Esophagus muscularis mucosa (tissue), 4 donors: ENCODE measurements at regions of chr17 and their contacts with region 1.

Region 1: DNA sequence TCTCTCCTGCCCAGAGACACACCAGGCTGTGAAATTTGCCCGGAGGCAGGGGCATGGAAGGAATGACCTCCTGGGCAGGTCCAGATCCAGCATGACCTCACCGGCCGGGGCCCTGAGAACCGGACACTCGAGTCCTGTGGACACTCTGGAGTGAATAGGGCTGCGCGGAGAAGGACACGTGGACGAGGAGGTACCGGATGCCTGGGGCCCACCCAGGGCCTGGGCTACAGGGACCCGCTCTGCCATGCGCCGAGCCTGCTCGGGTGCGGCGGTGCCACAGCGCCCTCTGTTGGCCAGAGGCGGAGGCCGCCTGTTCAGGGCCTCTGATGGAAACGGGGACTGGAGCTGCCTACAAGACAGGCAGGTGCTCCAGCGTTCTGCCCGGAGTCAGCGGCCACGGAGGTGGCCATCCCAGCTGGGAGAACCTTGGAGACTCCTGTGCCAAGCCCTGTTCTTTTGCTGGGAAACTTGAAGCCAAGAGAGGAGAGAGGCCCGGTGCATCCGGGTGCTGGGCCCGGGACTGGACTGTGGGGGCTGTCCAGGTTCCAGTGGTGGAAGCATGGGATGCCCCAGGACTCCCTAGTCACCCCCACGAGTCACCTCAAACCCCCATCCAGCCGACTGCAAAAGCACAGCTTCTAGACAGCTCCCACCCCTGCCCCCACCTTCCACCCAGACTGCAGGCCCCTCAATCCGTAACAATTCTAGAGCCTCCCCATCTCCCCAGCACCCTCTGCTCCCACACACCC is 19.3 kb upstream of the NXPH3 start:
- DNase-seq: no peak
- H3K4me3 ChIP-seq: peak overlapping the region in 1 of 4 donors; percentile 26
- H3K27ac ChIP-seq: no peak overlapping the region
- H3K4me1 ChIP-seq: peaks cover 4 to 12% (median 7%) of the 10 kb centered on the region in 4 donors
- H3K27me3 ChIP-seq: peaks cover 0 to 22% (median 0%) of the 10 kb centered on the region in 4 donors
- CTCF ChIP-seq: peak; percentile 93 to 100 (median 94)
- EP300 ChIP-seq: no peak
- POLR2A ChIP-seq: no peak

Region 2: GRCh38 chr17:49361902-49362722 is 194.3 kb before region 1 on chr17 and contains the start of gene ZNF652:
- intact Hi-C with region 1: no loop called
- DNase-seq: peak; percentile 95
- H3K4me3 ChIP-seq: peak within 1 kb of the TSS; percentile 86 to 100 (median 96)
- H3K27ac ChIP-seq: peak within 1 kb of the TSS; percentile 94 to 95 (median 95)
- H3K4me1 ChIP-seq: peaks cover 14 to 54% (median 48%) of the 10 kb centered on the region in 4 donors
- H3K27me3 ChIP-seq: no peaks in the 10 kb centered on the region
- CTCF ChIP-seq: no peak
- EP300 ChIP-seq: no peak
- POLR2A ChIP-seq: no peak
- total RNA-seq, gene ZNF652: 59.3 to 100.0 (median 83.0) TPM

Region 3: GRCh38 chr17:49435671-49436029 is 120.7 kb before region 1 on chr17:
- intact Hi-C with region 1: loop called (anchors 2 kb)
- DNase-seq: no peak
- H3K4me3 ChIP-seq: no peak overlapping the region
- H3K27ac ChIP-seq: no peak overlapping the region
- H3K4me1 ChIP-seq: peaks cover 0 to 10% (median 7%) of the 10 kb centered on the region in 4 donors
- H3K27me3 ChIP-seq: peaks cover 0 to 28% (median 12%) of the 10 kb centered on the region in 4 donors
- CTCF ChIP-seq: no peak
- EP300 ChIP-seq: no peak
- POLR2A ChIP-seq: no peak

Region 4: DNA sequence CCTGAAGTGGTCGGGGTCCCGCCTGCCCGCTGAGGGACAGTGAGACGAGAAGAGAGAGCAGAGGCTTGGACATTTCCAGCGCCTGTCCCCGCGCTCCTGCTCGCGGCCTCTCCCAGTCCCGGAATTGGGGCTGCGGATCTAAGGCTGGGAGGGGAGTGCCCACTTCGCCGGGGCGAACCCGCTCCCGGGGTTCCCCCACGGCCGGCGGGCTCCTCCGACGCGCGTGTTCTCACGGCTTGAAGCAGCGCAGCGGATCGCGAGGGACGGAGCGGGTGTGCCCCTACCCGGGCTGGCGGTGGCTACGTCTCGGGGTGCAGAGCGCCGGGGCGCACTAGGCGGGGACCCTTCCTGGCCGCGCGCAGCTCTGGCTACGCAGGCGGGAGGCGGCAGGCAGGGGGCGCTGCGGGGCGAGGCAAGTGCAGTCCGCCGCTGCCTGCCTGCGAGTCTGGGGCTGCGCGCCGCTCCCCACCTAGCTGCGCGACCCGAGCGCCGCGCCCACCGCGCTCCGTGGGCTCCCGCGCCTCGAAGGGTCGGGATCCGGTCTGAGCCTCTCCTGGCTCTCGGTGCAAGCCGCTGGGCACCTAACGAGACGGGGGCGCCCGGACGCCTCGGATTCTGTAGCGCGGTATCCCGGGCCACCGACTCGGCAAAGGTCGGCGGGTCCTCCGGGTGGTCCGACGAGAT is 60.1 kb before region 1 on chr17:
- intact Hi-C with region 1: loop called (anchors 1 kb)
- DNase-seq: no peak
- H3K4me3 ChIP-seq: peak overlapping the region; percentile 58 to 67 (median 60)
- H3K27ac ChIP-seq: peak overlapping the region in 1 of 4 donors; percentile 51
- H3K4me1 ChIP-seq: peaks cover 29 to 41% (median 39%) of the 10 kb centered on the region in 4 donors
- H3K27me3 ChIP-seq: peaks cover 0 to 65% (median 16%) of the 10 kb centered on the region in 4 donors
- CTCF ChIP-seq: peak; percentile 91 to 97 (median 91)
- EP300 ChIP-seq: no peak
- POLR2A ChIP-seq: no peak

Region 5: GRCh38 chr17:49616601-49617131 is 60.3 kb after region 1 on chr17:
- intact Hi-C with region 1: no loop called
- DNase-seq: no peak
- H3K4me3 ChIP-seq: no peak overlapping the region
- H3K27ac ChIP-seq: peak overlapping the region; percentile 64 to 76 (median 67)
- H3K4me1 ChIP-seq: peaks cover 39 to 95% (median 81%) of the 10 kb centered on the region in 4 donors
- H3K27me3 ChIP-seq: no peaks in the 10 kb centered on the region
- CTCF ChIP-seq: no peak
- EP300 ChIP-seq: no peak
- POLR2A ChIP-seq: no peak